ENCODE measurements at regions of chr3 and their contacts with region 1.

Region 1: DNA sequence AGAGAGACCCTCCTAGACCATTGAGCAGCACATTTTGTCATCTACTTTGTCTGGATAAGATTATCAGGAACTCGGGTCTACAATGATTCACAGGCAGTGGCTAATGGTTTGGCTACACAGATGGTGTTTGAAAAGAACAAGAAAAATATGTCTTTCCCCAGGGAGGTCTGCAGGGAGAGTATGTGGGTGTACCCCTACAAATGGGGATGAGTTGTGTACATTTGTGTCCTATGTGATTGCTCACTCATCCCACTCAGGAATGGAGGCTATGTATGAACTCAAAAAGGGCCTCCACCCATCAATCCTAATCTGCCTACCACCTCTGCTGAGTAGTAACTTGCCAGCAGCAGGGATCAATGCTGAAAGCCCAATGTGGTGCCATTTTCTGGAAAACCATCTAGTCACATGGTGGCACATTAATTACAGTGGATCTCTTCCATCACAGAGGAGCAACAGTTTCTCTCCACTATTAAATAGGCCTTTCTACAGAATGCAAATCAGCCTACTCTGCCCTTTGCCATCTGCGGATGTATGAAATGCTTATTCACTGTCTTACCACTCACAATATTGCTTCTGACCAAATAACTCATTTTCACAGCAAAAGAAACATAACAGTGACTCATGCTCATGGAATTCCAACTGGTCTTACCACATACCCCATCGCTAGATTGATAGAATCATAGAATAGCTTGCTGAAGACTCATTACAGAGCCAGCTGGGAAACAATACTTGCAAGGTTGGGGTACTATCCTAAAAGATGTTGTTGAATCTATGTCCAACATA is 48.3 kb upstream of the TRIM42 start:
- DNase-seq: peak; percentile 71
- H3K4me3 Mint-ChIP-seq: no peak overlapping the region
- H3K27ac Mint-ChIP-seq: peak overlapping the region; percentile 82
- H3K4me1 Mint-ChIP-seq: peaks cover 56% of the 10 kb centered on the region
- H3K27me3 Mint-ChIP-seq: no peaks in the 10 kb centered on the region
- CTCF ChIP-seq: no peak

Region 2: GRCh38 chr3:140724856-140725812 is 95.6 kb after region 1 on chr3:
- CTCF ChIA-PET with region 1: no interaction called
- intact Hi-C with region 1: loop called (anchors 5 kb)
- DNase-seq: no peak
- H3K4me3 Mint-ChIP-seq: no peak overlapping the region
- H3K27ac Mint-ChIP-seq: no peak overlapping the region
- H3K4me1 Mint-ChIP-seq: peaks cover 11% of the 10 kb centered on the region
- H3K27me3 Mint-ChIP-seq: peaks cover 10% of the 10 kb centered on the region
- CTCF ChIP-seq: no peak

Region 3: GRCh38 chr3:141336672-141337522 is 707.3 kb after region 1 on chr3:
- CTCF ChIA-PET with region 1: no interaction called
- intact Hi-C with region 1: no loop called
- DNase-seq: no peak
- H3K4me3 Mint-ChIP-seq: no peak overlapping the region
- H3K27ac Mint-ChIP-seq: no peak overlapping the region
- H3K4me1 Mint-ChIP-seq: peaks cover 9% of the 10 kb centered on the region
- H3K27me3 Mint-ChIP-seq: no peaks in the 10 kb centered on the region
- CTCF ChIP-seq: no peak